ENCODE measurements at regions of chr5 and their contacts with region 1.

Region 1: DNA sequence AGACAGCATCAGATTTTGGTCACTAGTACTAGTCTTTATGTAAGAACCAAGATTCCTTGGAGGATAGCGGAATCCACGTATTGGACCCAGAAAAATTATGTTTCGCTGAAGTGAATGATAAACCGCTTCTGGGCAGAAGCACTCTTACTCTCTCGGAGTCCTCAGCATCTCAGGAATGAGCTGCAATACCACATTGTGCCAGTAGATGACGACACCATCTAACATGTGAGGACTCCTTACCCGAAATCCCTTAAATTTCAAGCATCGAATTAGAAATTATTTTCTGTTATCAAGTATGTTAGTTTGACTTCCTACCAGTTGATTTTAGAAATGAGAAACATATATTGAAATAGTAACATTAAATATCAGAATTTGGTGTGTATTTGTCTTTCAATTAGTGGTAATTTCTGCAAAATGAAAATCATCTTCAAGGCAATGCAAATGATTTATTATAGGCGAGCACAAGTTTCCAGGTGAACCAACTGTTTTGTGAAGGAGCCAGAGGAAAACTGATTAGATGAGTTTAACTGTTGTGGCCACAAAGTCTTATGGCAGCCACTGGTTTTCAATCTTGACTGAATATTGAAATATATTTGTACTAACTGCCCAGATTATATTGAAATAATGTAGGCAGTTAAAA is 66.0 kb upstream of the CAMK4 start:
- DNase-seq: peak; percentile 84
- H3K4me3 ChIP-seq: no peak overlapping the region
- H3K27ac ChIP-seq: no peak overlapping the region
- H3K4me1 ChIP-seq: no peaks in the 10 kb centered on the region
- H3K27me3 ChIP-seq: no peaks in the 10 kb centered on the region
- CTCF ChIP-seq: peak; percentile 91 to 98
- POLR2A ChIP-seq: no peak

Region 2: GRCh38 chr5:110965773-110966581 is 192.2 kb before region 1 on chr5:
- CTCF ChIA-PET with region 1: no interaction called
- POLR2A ChIA-PET with region 1: no interaction called
- dilution Hi-C with region 1: no loop called
- intact Hi-C with region 1: no loop called
- DNase-seq: no peak
- H3K4me3 ChIP-seq: no peak overlapping the region
- H3K27ac ChIP-seq: no peak overlapping the region
- H3K4me1 ChIP-seq: no peaks in the 10 kb centered on the region
- H3K27me3 ChIP-seq: no peaks in the 10 kb centered on the region
- CTCF ChIP-seq: no peak
- POLR2A ChIP-seq: no peak

Region 3: GRCh38 chr5:111278845-111279504 is 120.8 kb after region 1 on chr5:
- CTCF ChIA-PET with region 1: interaction called, 62 read pairs
- POLR2A ChIA-PET with region 1: no interaction called
- dilution Hi-C with region 1: no loop called
- intact Hi-C with region 1: loop called (anchors 1 kb)
- DNase-seq: peak; percentile 60
- H3K4me3 ChIP-seq: no peak overlapping the region
- H3K27ac ChIP-seq: no peak overlapping the region
- H3K4me1 ChIP-seq: no peaks in the 10 kb centered on the region
- H3K27me3 ChIP-seq: no peaks in the 10 kb centered on the region
- CTCF ChIP-seq: peak; percentile 82 to 87
- POLR2A ChIP-seq: no peak

Region 4: DNA sequence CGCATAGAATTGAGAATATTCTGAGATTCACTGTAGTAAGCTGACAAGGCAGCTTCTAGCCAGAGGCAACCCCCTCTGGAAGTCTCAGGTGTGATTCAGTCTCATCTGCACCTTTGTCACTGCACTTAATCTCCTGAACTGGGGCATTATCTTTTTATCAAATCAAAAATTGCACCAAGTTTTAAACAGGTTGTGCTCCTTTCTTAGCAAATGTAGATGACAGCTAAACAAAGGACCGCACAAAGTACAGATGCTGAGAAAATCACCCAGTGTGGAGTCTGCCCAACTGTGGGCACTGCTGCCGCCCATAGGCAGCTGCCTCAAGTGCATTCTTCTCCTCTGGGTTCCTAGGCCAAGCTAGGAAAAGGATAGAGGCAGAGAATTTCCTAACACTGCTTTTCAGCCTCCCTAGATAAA is 303.0 kb after region 1 on chr5:
- CTCF ChIA-PET with region 1: interaction called, 32 read pairs
- POLR2A ChIA-PET with region 1: no interaction called
- dilution Hi-C with region 1: no loop called
- intact Hi-C with region 1: no loop called
- DNase-seq: no peak
- H3K4me3 ChIP-seq: no peak overlapping the region
- H3K27ac ChIP-seq: no peak overlapping the region
- H3K4me1 ChIP-seq: no peaks in the 10 kb centered on the region
- H3K27me3 ChIP-seq: no peaks in the 10 kb centered on the region
- CTCF ChIP-seq: peak; percentile 18 to 31
- POLR2A ChIP-seq: no peak

Region 5: DNA sequence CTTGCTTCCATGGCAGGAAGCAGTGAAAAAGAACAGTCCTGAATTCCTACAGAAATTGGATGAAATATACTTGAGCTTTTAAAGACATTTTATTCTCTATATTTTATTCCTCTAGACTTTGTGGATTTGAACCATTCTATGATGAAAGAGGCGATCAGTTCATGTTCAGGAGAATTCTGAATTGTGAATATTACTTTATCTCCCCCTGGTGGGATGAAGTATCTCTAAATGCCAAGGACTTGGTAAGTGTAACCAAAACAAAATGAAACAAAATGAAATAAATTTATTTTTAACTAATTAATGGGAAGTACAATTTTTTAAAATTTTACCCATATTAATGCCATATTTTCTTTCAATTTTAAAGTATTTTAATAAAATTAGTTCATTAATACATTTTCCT is 320.0 kb after region 1 on chr5:
- CTCF ChIA-PET with region 1: interaction called, 3 read pairs
- POLR2A ChIA-PET with region 1: no interaction called
- dilution Hi-C with region 1: no loop called
- intact Hi-C with region 1: loop called (anchors 2 kb)
- DNase-seq: no peak
- H3K4me3 ChIP-seq: no peak overlapping the region
- H3K27ac ChIP-seq: no peak overlapping the region
- H3K4me1 ChIP-seq: no peaks in the 10 kb centered on the region
- H3K27me3 ChIP-seq: no peaks in the 10 kb centered on the region
- CTCF ChIP-seq: no peak
- POLR2A ChIP-seq: no peak

Measured in endothelial cell of umbilical vein (primary cell).